Activated T-helper 1 cell treated with anti-CD3 and anti-CD28 coated beads, Interleukin-12 subunit alpha, Interleukin-12 subunit beta, Interleukin-2, Interleukin-4 antibody, amounts not matched to agents 30 ng/mL and 10 ng/mL and 1 ng/mL, durations not matched to agents 14 hours and 24 hours and 36 hours (primary cell): ENCODE measurements at regions of chr13 and their contacts with region 1.

Region 1: GRCh38 chr13:22278336-22278929 is 607.6 kb downstream of the FGF9 start:
- DNase-seq: peak; percentile 14
- H3K4me3 Mint-ChIP-seq: no peak overlapping the region
- H3K27ac Mint-ChIP-seq: no peak overlapping the region
- H3K4me1 Mint-ChIP-seq: peaks cover 4% of the 10 kb centered on the region
- H3K27me3 Mint-ChIP-seq: peaks cover 2% of the 10 kb centered on the region

Region 2: DNA sequence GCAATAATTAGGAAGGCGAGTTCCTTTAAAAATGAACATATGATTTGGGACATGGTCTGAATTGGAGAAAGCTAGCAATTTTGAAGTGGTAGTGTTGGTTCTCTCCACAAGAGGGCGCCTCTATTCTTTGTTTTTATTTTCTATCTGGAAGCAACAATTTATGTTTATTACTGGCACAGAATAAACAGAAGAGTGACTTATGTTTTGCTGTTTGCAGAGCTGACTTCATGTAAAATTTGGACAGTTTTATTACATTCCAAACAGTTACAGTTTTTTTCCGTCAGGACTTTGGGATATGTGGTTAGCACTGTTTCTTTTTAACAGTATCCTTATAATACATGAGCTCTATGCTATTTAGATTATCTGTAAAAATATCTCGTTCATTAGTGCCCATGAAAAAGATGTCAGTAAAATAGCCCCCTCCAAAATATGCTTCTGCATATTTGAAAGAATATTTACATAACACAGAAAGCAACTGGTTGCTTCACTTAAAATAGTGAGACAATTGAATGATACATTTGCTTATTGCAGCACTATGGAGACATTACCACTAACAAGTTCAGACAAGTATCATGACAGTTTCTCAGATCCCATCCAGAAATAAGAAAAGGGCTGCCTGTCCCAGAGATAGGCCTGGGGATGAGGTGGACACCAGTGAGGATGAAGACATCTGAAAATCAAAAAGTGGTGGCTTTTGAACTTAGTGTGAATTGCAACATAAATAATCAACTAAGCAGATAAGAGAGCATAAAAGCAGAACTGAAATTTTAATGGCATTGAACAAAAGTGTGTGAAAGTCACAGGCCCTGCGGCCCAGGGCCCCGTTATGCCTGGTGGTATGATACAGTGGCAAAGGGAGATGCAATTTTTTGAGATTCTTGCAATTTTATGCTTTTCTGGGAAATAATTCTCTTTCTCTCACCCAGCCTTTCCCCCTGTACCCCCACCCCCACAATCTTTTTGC is 639.8 kb before region 1 on chr13:
- intact Hi-C with region 1: loop called (anchors 1 kb)
- DNase-seq: no peak
- H3K4me3 Mint-ChIP-seq: no peak overlapping the region
- H3K27ac Mint-ChIP-seq: no peak overlapping the region
- H3K4me1 Mint-ChIP-seq: no peaks in the 10 kb centered on the region
- H3K27me3 Mint-ChIP-seq: peaks cover 7% of the 10 kb centered on the region

Region 3: GRCh38 chr13:21849323-21849722 is 429.1 kb before region 1 on chr13:
- intact Hi-C with region 1: loop called (anchors 1 kb)
- DNase-seq: no peak
- H3K4me3 Mint-ChIP-seq: no peak overlapping the region
- H3K27ac Mint-ChIP-seq: no peak overlapping the region
- H3K4me1 Mint-ChIP-seq: no peaks in the 10 kb centered on the region
- H3K27me3 Mint-ChIP-seq: no peaks in the 10 kb centered on the region

Region 4: GRCh38 chr13:21913010-21913409 is 365.4 kb before region 1 on chr13:
- intact Hi-C with region 1: loop called (anchors 1 kb)
- DNase-seq: no peak
- H3K4me3 Mint-ChIP-seq: no peak overlapping the region
- H3K27ac Mint-ChIP-seq: no peak overlapping the region
- H3K4me1 Mint-ChIP-seq: no peaks in the 10 kb centered on the region
- H3K27me3 Mint-ChIP-seq: no peaks in the 10 kb centered on the region

Region 5: DNA sequence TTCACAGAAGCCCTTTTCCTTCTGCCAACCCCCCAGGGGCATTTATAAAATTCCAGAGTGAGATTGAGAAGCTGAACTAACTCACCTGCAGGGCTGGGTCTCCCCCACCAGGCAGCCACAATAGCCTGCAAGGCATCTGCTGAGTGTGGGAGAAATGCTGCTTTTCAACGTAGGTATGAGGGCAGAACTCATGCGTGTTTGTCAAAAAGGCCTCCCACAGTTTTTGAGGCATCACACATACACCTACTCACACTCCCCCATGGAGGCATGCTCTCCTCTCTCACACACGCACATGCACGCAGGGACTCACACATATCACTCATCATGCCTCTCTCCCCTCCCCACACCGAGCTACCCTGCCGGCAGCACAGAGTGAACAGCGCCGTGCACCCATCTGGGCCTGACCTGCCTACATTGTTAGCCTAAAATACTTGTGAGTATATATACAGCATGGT is 217.1 kb before region 1 on chr13:
- intact Hi-C with region 1: loop called (anchors 1 kb)
- DNase-seq: peak; percentile 28
- H3K4me3 Mint-ChIP-seq: peak overlapping the region; percentile 53
- H3K27ac Mint-ChIP-seq: peak overlapping the region; percentile 83
- H3K4me1 Mint-ChIP-seq: peaks cover 65% of the 10 kb centered on the region
- H3K27me3 Mint-ChIP-seq: no peaks in the 10 kb centered on the region

Region 6: DNA sequence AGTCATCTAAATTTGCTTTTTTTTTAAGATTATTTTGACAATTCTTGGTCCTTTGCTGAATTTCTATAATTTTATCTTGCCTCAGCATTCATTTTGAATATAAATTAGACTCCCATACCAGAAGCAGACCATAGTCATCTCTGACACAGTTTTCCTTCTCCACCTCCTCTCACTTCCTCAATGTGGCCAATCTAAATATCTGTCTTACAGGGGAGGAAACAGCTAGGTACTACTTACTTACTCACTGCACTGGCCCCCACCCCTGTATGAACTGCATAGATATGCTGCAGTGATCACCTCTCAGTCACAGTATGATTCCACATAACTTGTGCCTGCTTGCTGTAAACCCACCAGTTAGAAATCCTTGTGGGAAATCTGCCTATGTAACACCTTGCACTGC is 58.0 kb after region 1 on chr13:
- intact Hi-C with region 1: loop called (anchors 2 kb)
- DNase-seq: no peak
- H3K4me3 Mint-ChIP-seq: no peak overlapping the region
- H3K27ac Mint-ChIP-seq: no peak overlapping the region
- H3K4me1 Mint-ChIP-seq: no peaks in the 10 kb centered on the region
- H3K27me3 Mint-ChIP-seq: no peaks in the 10 kb centered on the region